Heart right ventricle (tissue), 16 donors: ENCODE measurements at regions of chr3 and their contacts with region 1.

Region 1: GRCh38 chr3:179015551-179016020 is 56.0 kb downstream of the ZMAT3 start:
- DNase-seq: peak in 1 of 2 donors; percentile 56
- ATAC-seq: peak in 6 of 8 donors; percentile 55 to 83 (median 72)
- H3K4me3 ChIP-seq: no peak overlapping the region
- H3K27ac ChIP-seq: no peak overlapping the region
- H3K4me1 ChIP-seq: peaks cover 0 to 11% (median 10%) of the 10 kb centered on the region in 9 donors
- H3K27me3 ChIP-seq: no peaks in the 10 kb centered on the region
- CTCF ChIP-seq: peak; percentile 67 to 93 (median 87)

Region 2: DNA sequence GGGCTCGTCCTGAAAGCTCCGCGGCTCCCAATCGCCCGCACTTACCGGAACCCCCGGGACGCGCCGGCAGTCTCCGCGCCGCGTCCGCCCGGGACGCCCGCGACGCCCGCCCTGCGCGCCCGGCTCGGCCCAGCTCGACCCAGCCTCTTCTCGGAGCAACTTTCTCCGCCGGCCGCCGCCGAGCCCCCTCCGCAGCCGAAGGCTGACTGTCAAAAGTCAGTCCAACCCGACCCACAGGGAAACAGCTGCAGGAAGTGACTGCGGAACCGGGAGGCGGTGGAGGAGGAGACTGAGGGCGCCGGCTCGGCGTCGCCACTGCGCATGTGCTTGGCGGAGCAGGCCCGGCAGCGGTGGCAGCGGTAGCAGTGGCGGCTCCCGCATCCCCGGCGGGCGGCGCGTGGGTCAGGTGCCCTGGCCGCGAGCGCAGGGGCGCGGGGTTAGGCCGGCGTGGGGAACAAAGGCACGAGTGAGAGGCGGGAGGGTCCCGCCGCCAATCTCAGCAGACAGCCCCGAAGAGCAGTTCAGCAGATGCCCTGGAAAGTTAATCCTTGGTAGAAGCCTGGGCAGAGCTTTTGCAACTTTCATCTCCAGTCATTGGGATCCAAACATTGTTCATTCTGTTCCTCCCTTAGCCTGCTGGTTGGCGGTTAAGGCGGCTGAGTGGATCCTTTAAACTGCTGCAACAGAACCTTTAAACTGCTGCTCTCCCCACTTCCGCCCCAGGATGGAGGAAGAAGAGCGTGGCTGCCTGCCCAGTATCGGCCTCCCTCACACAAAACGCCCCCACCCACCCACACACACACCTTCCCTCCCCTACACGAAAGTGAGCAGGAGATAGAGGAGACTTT is 56.2 kb after region 1 on chr3 and contains the start of gene ZMAT3:
- intact Hi-C with region 1: loop called in 2 of 10 experiments (anchors 5 to 10 kb)
- DNase-seq: peak; percentile 90 to 91
- ATAC-seq: peak; percentile 97 to 99 (median 98)
- H3K4me3 ChIP-seq: peak within 1 kb of the TSS; percentile 64 to 92 (median 77)
- H3K27ac ChIP-seq: peak within 1 kb of the TSS; percentile 53 to 97 (median 90)
- H3K4me1 ChIP-seq: peaks cover 0 to 44% (median 25%) of the 10 kb centered on the region in 9 donors
- H3K27me3 ChIP-seq: no peaks in the 10 kb centered on the region
- CTCF ChIP-seq: no peak
- total RNA-seq, gene ZMAT3: 10.1 to 18.2 (median 13.1) TPM

Region 3: GRCh38 chr3:179108086-179108485 is 92.5 kb after region 1 on chr3:
- intact Hi-C with region 1: loop called in 1 of 10 experiments (anchors 5 kb)
- DNase-seq: no peak
- ATAC-seq: no peak
- H3K4me3 ChIP-seq: no peak overlapping the region
- H3K27ac ChIP-seq: no peak overlapping the region
- H3K4me1 ChIP-seq: no peaks in the 10 kb centered on the region
- H3K27me3 ChIP-seq: peaks cover 0 to 4% (median 0%) of the 10 kb centered on the region in 7 donors
- CTCF ChIP-seq: no peak

Region 4: GRCh38 chr3:179141890-179142289 is 126.3 kb after region 1 on chr3:
- intact Hi-C with region 1: loop called in 4 of 10 experiments (anchors 5 to 10 kb)
- DNase-seq: no peak
- ATAC-seq: no peak
- H3K4me3 ChIP-seq: no peak overlapping the region
- H3K27ac ChIP-seq: no peak overlapping the region
- H3K4me1 ChIP-seq: peaks cover 0 to 6% (median 4%) of the 10 kb centered on the region in 9 donors
- H3K27me3 ChIP-seq: no peaks in the 10 kb centered on the region
- CTCF ChIP-seq: no peak

Region 5: GRCh38 chr3:179309225-179310078 is 293.9 kb after region 1 on chr3:
- intact Hi-C with region 1: loop called in 1 of 10 experiments (anchors 10 kb)
- DNase-seq: no peak
- ATAC-seq: no peak
- H3K4me3 ChIP-seq: no peak overlapping the region
- H3K27ac ChIP-seq: no peak overlapping the region
- H3K4me1 ChIP-seq: no peaks in the 10 kb centered on the region
- H3K27me3 ChIP-seq: peaks cover 0 to 12% (median 0%) of the 10 kb centered on the region in 7 donors
- CTCF ChIP-seq: no peak

Region 6: GRCh38 chr3:179322286-179323196 is 307.0 kb after region 1 on chr3 and contains the start of gene ZNF639:
- intact Hi-C with region 1: loop called in 9 of 10 experiments (anchors 1 to 10 kb)
- DNase-seq: peak; percentile 80 to 88
- ATAC-seq: peak; percentile 87 to 95 (median 92)
- H3K4me3 ChIP-seq: peak within 1 kb of the TSS; percentile 82 to 99 (median 90)
- H3K27ac ChIP-seq: peak within 1 kb of the TSS; percentile 93 to 99 (median 97)
- H3K4me1 ChIP-seq: peaks cover 3 to 54% (median 31%) of the 10 kb centered on the region in 9 donors
- H3K27me3 ChIP-seq: no peaks in the 10 kb centered on the region
- CTCF ChIP-seq: peak; percentile 82 to 95 (median 86)
- total RNA-seq, gene ZNF639: 25.8 to 41.0 (median 30.6) TPM